Testis (tissue), 5 donors: ENCODE measurements at regions of chr1 and their contacts with region 1.

Region 1: GRCh38 chr1:9942939-9943788 is at the starts of genes LZIC and NMNAT1:
- DNase-seq: peak; percentile 96
- H3K4me3 ChIP-seq: peak within 1 kb of the TSS; percentile 77 to 80
- H3K27ac ChIP-seq: peak within 1 kb of the TSS; percentile 55 to 92
- H3K4me1 ChIP-seq: no peaks in the 10 kb centered on the region
- H3K27me3 ChIP-seq: no peaks in the 10 kb centered on the region
- CTCF ChIP-seq: no peak
- POLR2A ChIP-seq: peak; percentile 7
- total RNA-seq, gene LZIC: 48.6 to 49.4 TPM
- total RNA-seq, gene NMNAT1: 8.1 to 13.0 TPM

Region 2: DNA sequence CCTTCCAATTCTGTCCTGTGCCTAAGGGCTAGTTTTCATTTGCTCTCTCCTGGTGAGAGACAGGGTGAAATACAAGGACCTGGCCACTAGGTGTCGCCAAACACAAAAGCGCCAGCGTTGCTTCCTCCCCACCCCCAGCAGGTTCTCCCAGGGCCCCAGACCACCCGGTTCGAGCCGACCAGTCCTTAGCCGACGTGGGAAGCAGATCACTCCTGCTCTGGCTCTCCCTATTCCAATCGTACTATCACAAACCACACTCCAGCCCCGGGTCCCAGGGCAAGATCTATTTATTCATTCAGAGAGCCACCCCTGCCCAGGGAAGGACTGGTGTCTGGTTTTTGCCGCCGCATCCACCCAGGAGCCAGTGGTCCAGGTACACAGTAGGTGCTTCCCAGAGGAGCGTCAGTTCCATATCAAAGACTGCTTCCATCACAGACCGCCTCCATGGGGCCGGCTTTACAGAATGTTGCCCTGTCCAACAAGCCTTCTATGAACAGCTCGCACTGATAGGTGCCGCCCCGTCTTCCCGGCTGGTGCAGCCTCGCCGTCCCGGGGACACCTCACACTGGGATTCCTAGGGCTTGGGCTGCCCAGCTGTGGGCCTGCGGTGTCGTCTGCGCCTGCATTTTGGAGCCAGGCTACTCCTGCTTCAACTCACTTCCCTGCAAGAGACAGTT is 68.1 kb before region 1 on chr1:
- intact Hi-C with region 1: loop called (anchors 10 kb)
- DNase-seq: peak; percentile 79
- H3K4me3 ChIP-seq: no peak overlapping the region
- H3K27ac ChIP-seq: no peak overlapping the region
- H3K4me1 ChIP-seq: peaks cover 7% of the 10 kb centered on the region
- H3K27me3 ChIP-seq: no peaks in the 10 kb centered on the region
- CTCF ChIP-seq: peak; percentile 89 to 98 (median 90)
- POLR2A ChIP-seq: no peak